Prostate gland (tissue), 2 donors: ENCODE measurements at regions of chr19 and their contacts with region 1.

Region 1: DNA sequence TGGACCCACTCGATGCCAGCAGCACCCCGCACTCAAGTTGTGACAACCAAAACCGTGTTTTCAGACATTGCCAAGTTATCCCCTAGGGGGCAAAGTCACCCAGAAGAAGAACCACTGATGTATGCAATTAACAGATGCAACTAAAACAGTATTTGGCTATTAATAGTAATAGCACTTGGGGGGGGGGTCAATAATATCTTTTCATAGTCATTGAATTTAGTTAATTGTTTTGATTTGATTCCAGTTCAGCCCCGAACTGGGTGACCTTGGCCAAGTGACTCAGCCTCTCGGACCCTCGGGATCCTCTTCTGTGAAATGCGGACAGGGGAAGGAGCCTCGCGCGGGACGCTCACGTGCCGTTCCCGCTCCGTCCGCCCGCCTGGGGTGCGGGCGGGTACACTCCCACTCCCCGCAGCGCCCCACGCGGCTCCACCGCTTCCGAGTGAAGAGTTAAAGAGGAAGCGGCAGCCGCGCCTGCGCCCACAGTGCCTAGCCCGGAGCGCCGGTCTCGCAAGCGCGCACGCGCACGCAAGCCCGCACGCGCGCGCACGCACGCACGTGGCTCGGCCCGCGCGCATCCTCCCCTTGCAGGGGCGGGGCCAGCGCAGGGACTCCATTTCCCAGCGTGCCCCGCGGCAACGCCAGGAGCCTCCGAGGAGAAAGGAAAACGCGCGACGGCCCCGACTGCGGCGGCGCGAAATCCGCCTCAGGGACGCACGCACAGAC is 449 bp upstream of the DAZAP1 start:
- DNase-seq: peak; percentile 99
- H3K4me3 ChIP-seq: peak overlapping the region; percentile 47 to 95
- H3K27ac ChIP-seq: peak overlapping the region; percentile 90 to 96
- H3K4me1 ChIP-seq: peaks cover 34% of the 10 kb centered on the region
- H3K27me3 ChIP-seq: no peaks in the 10 kb centered on the region
- CTCF ChIP-seq: peak in 3 of 4 experiments; percentile 44 to 50 (median 48)
- POLR2A ChIP-seq: peak; percentile 54

Region 2: GRCh38 chr19:1315470-1316231 is 91.3 kb before region 1 on chr19:
- intact Hi-C with region 1: loop called (anchors 10 kb)
- DNase-seq: peak; percentile 44
- H3K4me3 ChIP-seq: peak overlapping the region; percentile 3 to 15
- H3K27ac ChIP-seq: no peak overlapping the region
- H3K4me1 ChIP-seq: peaks cover 5% of the 10 kb centered on the region
- H3K27me3 ChIP-seq: no peaks in the 10 kb centered on the region
- CTCF ChIP-seq: peak; percentile 43 to 74 (median 64)
- POLR2A ChIP-seq: no peak